Caco-2 (cell line): ENCODE measurements at regions of chr22 and their contacts with region 1.

Region 1: GRCh38 chr22:36123673-36124630 is 36.6 kb downstream of the APOL3 start:
- DNase-seq: peak; percentile 92 to 94
- H3K4me3 ChIP-seq: peak overlapping the region; percentile 25
- H3K4me3 Mint-ChIP-seq: peak overlapping the region; percentile 63
- H3K27ac Mint-ChIP-seq: peak overlapping the region; percentile 85
- H3K4me1 ChIP-seq: 0 out of 2 replicates have a peak, but pooled peaks cover 3% of the 10 kb centered on the region
- H3K4me1 Mint-ChIP-seq: peaks cover 7% of the 10 kb centered on the region
- H3K27me3 ChIP-seq: no peaks in the 10 kb centered on the region
- H3K27me3 Mint-ChIP-seq: peaks cover 9% of the 10 kb centered on the region
- CTCF ChIP-seq: peak; percentile 92 to 97

Region 2: GRCh38 chr22:35627264-35628041 is 496.5 kb before region 1 on chr22:
- CTCF ChIA-PET with region 1: no interaction called
- POLR2A ChIA-PET with region 1: no interaction called
- intact Hi-C with region 1: loop called (anchors 2 kb)
- DNase-seq: peak; percentile 76 to 79
- H3K4me3 ChIP-seq: peak overlapping the region; percentile 65
- H3K4me3 Mint-ChIP-seq: peak overlapping the region; percentile 79
- H3K27ac Mint-ChIP-seq: peak overlapping the region; percentile 78
- H3K4me1 ChIP-seq: peaks cover 8% of the 10 kb centered on the region
- H3K4me1 Mint-ChIP-seq: peaks cover 18% of the 10 kb centered on the region
- H3K27me3 ChIP-seq: no peaks in the 10 kb centered on the region; the same call in 1 of the 2 replicates
- H3K27me3 Mint-ChIP-seq: no peaks in the 10 kb centered on the region
- CTCF ChIP-seq: peak in 1 of 2 experiments; percentile 68

Region 3: GRCh38 chr22:35739076-35739930 is 384.6 kb before region 1 on chr22:
- CTCF ChIA-PET with region 1: no interaction called
- POLR2A ChIA-PET with region 1: no interaction called
- intact Hi-C with region 1: loop called (anchors 10 kb)
- DNase-seq: peak in 1 of 2 experiments; percentile 47
- H3K4me3 ChIP-seq: no peak overlapping the region
- H3K4me3 Mint-ChIP-seq: no peak overlapping the region
- H3K27ac Mint-ChIP-seq: no peak overlapping the region
- H3K4me1 ChIP-seq: no peaks in the 10 kb centered on the region
- H3K4me1 Mint-ChIP-seq: no peaks in the 10 kb centered on the region
- H3K27me3 ChIP-seq: no peaks in the 10 kb centered on the region
- H3K27me3 Mint-ChIP-seq: no peaks in the 10 kb centered on the region
- CTCF ChIP-seq: peak; percentile 12 to 58

Region 4: DNA sequence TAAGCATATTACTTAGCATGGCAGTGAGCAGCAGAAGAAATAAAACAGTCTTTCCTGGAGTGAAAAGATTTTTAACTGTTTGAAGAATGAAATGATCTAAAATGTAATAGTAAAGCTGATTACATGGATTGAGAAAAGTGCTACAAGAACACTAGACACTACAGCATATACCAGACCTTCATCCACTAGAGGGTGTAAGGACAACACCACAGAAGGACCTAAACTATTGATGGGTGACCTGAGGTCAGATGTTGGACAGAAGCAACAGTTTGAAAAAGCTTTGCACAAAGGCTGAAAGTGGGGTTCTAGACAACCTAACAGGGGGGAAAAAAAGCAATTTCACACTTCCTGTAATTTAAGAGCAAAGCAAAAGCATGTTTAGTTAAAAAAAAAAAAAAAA is 193.0 kb before region 1 on chr22:
- CTCF ChIA-PET with region 1: interaction called, 7 read pairs
- POLR2A ChIA-PET with region 1: no interaction called
- intact Hi-C with region 1: loop called (anchors 1 kb)
- DNase-seq: peak in 1 of 2 experiments; percentile 58
- H3K4me3 ChIP-seq: no peak overlapping the region
- H3K4me3 Mint-ChIP-seq: no peak overlapping the region
- H3K27ac Mint-ChIP-seq: peak overlapping the region; percentile 27
- H3K4me1 ChIP-seq: no peaks in the 10 kb centered on the region
- H3K4me1 Mint-ChIP-seq: peaks cover 6% of the 10 kb centered on the region
- H3K27me3 ChIP-seq: no peaks in the 10 kb centered on the region
- H3K27me3 Mint-ChIP-seq: no peaks in the 10 kb centered on the region
- CTCF ChIP-seq: peak; percentile 30 to 71

Region 5: DNA sequence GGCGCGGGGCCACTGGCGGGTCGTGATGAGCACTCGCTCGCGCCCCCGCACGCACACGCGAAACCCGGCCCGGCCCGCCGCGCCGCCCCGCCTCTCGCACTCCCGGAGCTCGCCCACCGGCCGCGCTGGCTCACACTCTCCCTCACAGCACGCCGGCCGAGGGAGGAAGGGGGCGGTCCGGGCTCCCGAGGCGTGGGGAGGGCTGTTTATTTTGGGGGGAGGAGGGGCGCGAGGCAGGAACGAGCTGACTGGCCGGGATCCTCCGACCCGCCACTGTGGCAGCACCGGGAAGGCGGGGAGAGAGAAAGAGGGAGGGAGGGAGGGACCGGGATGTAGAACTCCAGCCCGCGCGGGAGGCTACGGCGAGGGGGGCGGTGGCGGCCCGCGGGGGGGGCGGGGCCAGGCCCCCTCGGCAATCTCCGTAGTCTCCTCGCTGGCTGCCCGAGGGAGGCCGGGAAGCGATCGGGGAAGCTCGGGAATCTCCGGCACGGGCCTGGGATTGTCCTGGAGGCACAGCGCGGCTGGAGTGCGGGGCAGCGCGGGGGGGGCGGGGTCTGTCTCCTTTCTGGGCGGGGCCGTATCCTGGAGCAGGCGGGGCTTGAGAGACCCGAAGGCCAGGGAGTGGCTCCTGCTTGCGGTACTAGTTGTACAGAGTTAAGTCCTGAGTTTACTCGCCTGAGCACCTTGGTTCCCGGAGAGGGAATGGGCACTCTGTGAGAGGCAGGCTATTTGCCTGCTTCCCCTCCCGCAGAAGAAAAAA is 95.1 kb before region 1 on chr22 and contains the start of gene RBFOX2:
- CTCF ChIA-PET with region 1: no interaction called
- POLR2A ChIA-PET with region 1: no interaction called
- intact Hi-C with region 1: loop called (anchors 5 kb)
- DNase-seq: peak; percentile 96 to 98
- H3K4me3 ChIP-seq: peak within 1 kb of the TSS; percentile 93
- H3K4me3 Mint-ChIP-seq: peak within 1 kb of the TSS; percentile 88
- H3K27ac Mint-ChIP-seq: peak within 1 kb of the TSS; percentile 81
- H3K4me1 ChIP-seq: peaks cover 11% of the 10 kb centered on the region; the same call in 1 of the 2 replicates
- H3K4me1 Mint-ChIP-seq: peaks cover 25% of the 10 kb centered on the region
- H3K27me3 ChIP-seq: no peaks in the 10 kb centered on the region
- H3K27me3 Mint-ChIP-seq: no peaks in the 10 kb centered on the region
- CTCF ChIP-seq: no peak
- total RNA-seq, gene RBFOX2: 91.1 and 96.5 TPM in 2 replicates

Region 6: GRCh38 chr22:36110306-36110881 is 13.6 kb before region 1 on chr22:
- CTCF ChIA-PET with region 1: no interaction called
- POLR2A ChIA-PET with region 1: no interaction called
- intact Hi-C with region 1: no loop called
- DNase-seq: no peak
- H3K4me3 ChIP-seq: no peak overlapping the region
- H3K4me3 Mint-ChIP-seq: no peak overlapping the region
- H3K27ac Mint-ChIP-seq: no peak overlapping the region
- H3K4me1 ChIP-seq: no peaks in the 10 kb centered on the region
- H3K4me1 Mint-ChIP-seq: no peaks in the 10 kb centered on the region
- H3K27me3 ChIP-seq: no peaks in the 10 kb centered on the region
- H3K27me3 Mint-ChIP-seq: no peaks in the 10 kb centered on the region
- CTCF ChIP-seq: no peak